MCF 10A (cell line): ENCODE measurements at regions of chr16 and their contacts with region 1.

Region 1: GRCh38 chr16:73058221-73058615 is 10.3 kb upstream of the ZFHX3 start:
- DNase-seq: peak; percentile 46
- H3K4me3 Mint-ChIP-seq: peak overlapping the region; percentile 87
- H3K27ac Mint-ChIP-seq: no peak overlapping the region
- H3K4me1 Mint-ChIP-seq: peaks cover 38% of the 10 kb centered on the region
- H3K27me3 Mint-ChIP-seq: no peaks in the 10 kb centered on the region
- CTCF ChIP-seq: peak; percentile 11

Region 2: DNA sequence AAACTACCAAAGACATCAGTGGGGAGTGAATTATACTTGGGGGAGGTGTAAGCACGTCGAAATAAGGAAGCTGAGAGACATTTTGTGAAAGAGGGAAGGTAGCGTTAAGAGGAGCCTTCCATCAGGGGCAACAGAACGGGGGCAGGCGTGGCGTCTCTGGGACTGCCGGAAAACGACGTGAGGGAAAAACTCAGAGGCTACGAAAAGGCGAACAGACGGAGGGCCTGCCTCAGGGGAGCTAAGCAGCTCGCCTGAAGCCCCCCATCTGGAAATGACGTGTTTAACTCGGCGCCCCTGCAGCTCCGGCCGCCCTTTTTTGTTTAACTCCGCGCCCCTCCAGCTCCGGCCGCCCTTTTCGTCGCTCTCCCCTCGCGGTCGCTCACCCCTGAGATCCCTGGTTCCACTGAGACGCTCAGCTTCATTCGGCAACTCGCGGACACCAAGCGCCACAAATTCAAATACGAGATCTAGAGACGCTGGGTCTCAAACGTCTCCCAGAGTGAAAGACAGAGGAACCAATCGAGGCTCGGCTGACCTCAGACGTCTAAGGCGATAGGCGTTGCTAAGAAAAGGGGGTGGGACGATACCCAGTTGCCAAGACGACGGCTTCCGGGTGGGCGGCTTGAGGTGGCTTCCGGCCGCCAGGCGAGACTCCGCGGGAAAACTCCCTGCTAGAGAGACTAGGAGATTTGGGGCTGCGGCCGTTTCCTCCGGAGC is 393.6 kb before region 1 on chr16:
- CTCF ChIA-PET with region 1: no interaction called
- POLR2A ChIA-PET with region 1: interaction called, 4 read pairs
- intact Hi-C with region 1: loop called (anchors 10 kb)
- DNase-seq: peak; percentile 99
- H3K4me3 Mint-ChIP-seq: peak overlapping the region; percentile 99
- H3K27ac Mint-ChIP-seq: peak overlapping the region; percentile 96
- H3K4me1 Mint-ChIP-seq: no peaks in the 10 kb centered on the region
- H3K27me3 Mint-ChIP-seq: no peaks in the 10 kb centered on the region
- CTCF ChIP-seq: no peak

Region 3: GRCh38 chr16:72989579-72990551 is 68.4 kb before region 1 on chr16:
- CTCF ChIA-PET with region 1: interaction called, 6 read pairs
- POLR2A ChIA-PET with region 1: interaction called, 31 read pairs
- intact Hi-C with region 1: loop called (anchors 2 kb)
- DNase-seq: peak; percentile 94
- H3K4me3 Mint-ChIP-seq: peak overlapping the region; percentile 73
- H3K27ac Mint-ChIP-seq: peak overlapping the region; percentile 95
- H3K4me1 Mint-ChIP-seq: peaks cover 73% of the 10 kb centered on the region
- H3K27me3 Mint-ChIP-seq: no peaks in the 10 kb centered on the region
- CTCF ChIP-seq: no peak

Region 4: GRCh38 chr16:73068541-73069401 is 10.6 kb after region 1 on chr16:
- CTCF ChIA-PET with region 1: interaction called, 9 read pairs
- POLR2A ChIA-PET with region 1: interaction called, 111 read pairs
- intact Hi-C with region 1: no loop called
- DNase-seq: peak; percentile 86
- H3K4me3 Mint-ChIP-seq: no peak overlapping the region
- H3K27ac Mint-ChIP-seq: peak overlapping the region; percentile 96
- H3K4me1 Mint-ChIP-seq: peaks cover 36% of the 10 kb centered on the region
- H3K27me3 Mint-ChIP-seq: no peaks in the 10 kb centered on the region
- CTCF ChIP-seq: no peak

Region 5: DNA sequence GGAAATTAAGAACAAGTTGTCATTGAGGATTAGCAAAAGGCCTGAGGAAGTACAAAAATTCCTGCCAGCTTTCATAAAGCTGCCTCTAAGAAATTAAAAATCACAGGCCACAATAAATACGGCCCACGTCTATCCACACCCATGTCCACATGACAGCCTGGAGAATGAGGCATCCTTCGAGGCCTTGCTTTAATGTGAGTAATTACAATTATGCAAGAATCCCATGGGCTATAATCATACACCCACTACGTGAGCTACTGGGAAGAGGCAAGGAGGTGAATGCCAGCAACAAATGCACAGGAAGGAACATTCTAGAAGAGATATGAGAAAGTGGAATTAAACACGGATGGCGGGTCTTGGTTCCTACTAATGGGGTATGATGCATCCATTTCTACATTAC is 55.1 kb after region 1 on chr16:
- CTCF ChIA-PET with region 1: no interaction called
- POLR2A ChIA-PET with region 1: interaction called, 4 read pairs
- intact Hi-C with region 1: loop called (anchors 5 kb)
- DNase-seq: peak; percentile 87
- H3K4me3 Mint-ChIP-seq: no peak overlapping the region
- H3K27ac Mint-ChIP-seq: peak overlapping the region; percentile 100
- H3K4me1 Mint-ChIP-seq: peaks cover 17% of the 10 kb centered on the region
- H3K27me3 Mint-ChIP-seq: no peaks in the 10 kb centered on the region
- CTCF ChIP-seq: no peak

Region 6: DNA sequence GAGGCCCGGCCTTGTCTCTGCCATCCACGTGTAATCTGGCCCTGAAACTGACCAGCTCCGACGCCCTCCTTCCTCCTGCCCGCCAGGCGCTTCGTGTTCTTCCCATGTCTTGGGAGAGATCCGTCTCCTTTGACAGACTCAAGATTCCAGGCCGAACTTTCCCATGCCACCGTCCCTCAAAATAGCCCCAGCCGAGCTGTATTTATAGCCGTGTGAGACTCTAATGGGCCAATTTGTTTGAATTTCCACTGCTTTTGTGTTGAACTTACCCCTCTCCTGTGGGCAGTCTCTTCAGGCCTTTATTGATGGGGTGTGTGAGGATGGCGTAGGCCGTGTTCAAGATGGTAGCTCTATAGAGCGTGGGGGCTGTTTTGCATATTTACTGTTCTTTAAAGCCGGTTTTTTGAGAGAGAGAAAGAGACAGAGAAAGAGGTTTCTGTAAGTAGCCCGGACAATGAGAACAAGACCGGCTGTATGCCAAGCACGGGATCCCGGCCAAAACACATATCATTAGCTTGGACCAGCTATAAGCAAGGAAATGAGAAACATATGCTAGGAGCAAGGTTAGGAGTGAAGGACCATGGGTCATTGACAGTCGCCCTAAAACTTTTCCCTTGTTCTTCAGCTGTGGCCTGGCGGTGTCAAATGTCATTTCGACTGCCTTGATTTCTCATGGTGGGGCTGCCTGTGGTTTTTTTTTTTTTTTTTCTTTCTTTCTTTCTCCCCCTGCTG is 114.2 kb after region 1 on chr16:
- CTCF ChIA-PET with region 1: interaction called, 7 read pairs
- POLR2A ChIA-PET with region 1: interaction called, 6 read pairs
- intact Hi-C with region 1: loop called (anchors 1 kb)
- DNase-seq: peak; percentile 87
- H3K4me3 Mint-ChIP-seq: no peak overlapping the region
- H3K27ac Mint-ChIP-seq: no peak overlapping the region
- H3K4me1 Mint-ChIP-seq: peaks cover 37% of the 10 kb centered on the region
- H3K27me3 Mint-ChIP-seq: no peaks in the 10 kb centered on the region
- CTCF ChIP-seq: peak; percentile 42